ENCODE measurements at regions of chr6 and their contacts with region 1.

Region 1: DNA sequence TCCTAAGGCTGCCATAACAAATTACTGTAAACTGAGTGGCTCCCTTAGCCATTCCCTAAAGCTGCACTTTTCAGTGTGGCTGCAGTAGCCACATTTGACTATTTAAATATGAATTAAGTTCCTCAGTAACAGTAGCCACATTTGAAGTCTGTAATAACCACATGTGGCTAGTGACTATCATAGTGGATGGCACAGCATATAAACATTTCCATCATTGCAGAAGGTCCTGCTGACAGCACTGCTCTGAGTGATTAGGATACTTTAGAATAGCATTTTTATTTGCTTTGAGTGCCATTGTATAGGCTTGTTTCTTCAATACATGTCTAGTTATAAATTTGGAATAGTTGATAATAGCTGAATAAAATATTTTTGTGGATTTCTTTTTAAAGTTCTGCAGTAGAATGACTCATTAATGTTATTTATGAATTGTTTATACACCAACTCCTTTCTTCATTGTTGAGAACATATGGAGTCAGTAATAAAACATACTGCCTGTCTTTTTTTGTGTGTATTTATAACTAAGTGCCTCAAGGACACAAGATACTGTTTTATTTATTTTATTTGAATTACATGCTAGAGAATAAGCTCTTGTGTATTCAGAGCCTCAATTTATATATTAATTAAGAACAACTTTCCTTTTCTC is 217.2 kb downstream of the CDKAL1 start:
- DNase-seq: no peak
- ATAC-seq: no peak
- H3K4me3 ChIP-seq: no peak overlapping the region
- H3K27ac ChIP-seq: no peak overlapping the region
- H3K4me1 ChIP-seq: no peaks in the 10 kb centered on the region
- H3K27me3 ChIP-seq: no peaks in the 10 kb centered on the region
- CTCF ChIP-seq: no peak

Region 2: GRCh38 chr6:20732896-20733295 is 18.5 kb before region 1 on chr6:
- CTCF ChIA-PET with region 1: no interaction called
- POLR2A ChIA-PET with region 1: no interaction called
- in situ Hi-C with region 1: no loop called
- intact Hi-C with region 1: no loop called
- DNase-seq: no peak
- ATAC-seq: no peak
- H3K4me3 ChIP-seq: no peak overlapping the region
- H3K27ac ChIP-seq: no peak overlapping the region
- H3K4me1 ChIP-seq: no peaks in the 10 kb centered on the region
- H3K27me3 ChIP-seq: no peaks in the 10 kb centered on the region
- CTCF ChIP-seq: no peak

Region 3: GRCh38 chr6:20778459-20778858 is 27.0 kb after region 1 on chr6:
- CTCF ChIA-PET with region 1: no interaction called
- POLR2A ChIA-PET with region 1: no interaction called
- in situ Hi-C with region 1: no loop called
- intact Hi-C with region 1: no loop called
- DNase-seq: no peak
- ATAC-seq: no peak
- H3K4me3 ChIP-seq: no peak overlapping the region
- H3K27ac ChIP-seq: no peak overlapping the region
- H3K4me1 ChIP-seq: no peaks in the 10 kb centered on the region
- H3K27me3 ChIP-seq: no peaks in the 10 kb centered on the region
- CTCF ChIP-seq: no peak

Region 4: DNA sequence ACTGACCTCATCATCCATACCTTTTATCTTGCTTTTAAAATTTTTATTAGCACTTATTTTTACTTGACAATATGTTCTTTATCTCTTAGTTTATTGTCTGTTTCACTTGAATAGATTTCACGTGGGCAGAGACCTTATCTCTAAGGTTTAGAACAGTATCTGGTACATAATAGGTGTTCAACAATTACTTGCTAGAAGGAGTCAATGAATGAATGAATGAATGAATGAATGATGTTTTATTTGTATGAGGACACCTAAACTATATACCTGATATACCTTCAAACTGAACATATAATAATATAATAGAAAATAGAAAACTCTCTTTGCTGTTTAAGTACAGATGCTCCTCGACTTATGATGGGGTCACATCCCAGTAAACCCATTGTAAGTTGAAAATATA is 195.5 kb after region 1 on chr6:
- CTCF ChIA-PET with region 1: no interaction called
- POLR2A ChIA-PET with region 1: interaction called, 18 read pairs
- in situ Hi-C with region 1: no loop called
- intact Hi-C with region 1: no loop called
- DNase-seq: no peak
- ATAC-seq: no peak
- H3K4me3 ChIP-seq: no peak overlapping the region
- H3K27ac ChIP-seq: no peak overlapping the region
- H3K4me1 ChIP-seq: no peaks in the 10 kb centered on the region
- H3K27me3 ChIP-seq: no peaks in the 10 kb centered on the region
- CTCF ChIP-seq: no peak